Activated CD8-positive, alpha-beta T cell treated with anti-CD3 and anti-CD28 coated beads for 36 hours (primary cell): ENCODE measurements at regions of chr10 and their contacts with region 1.

Region 1: GRCh38 chr10:96374985-96375830 is 16.4 kb upstream of the OPALIN start:
- DNase-seq: peak; percentile 85
- ATAC-seq: peak; percentile 92
- H3K4me3 Mint-ChIP-seq: peak overlapping the region; percentile 78
- H3K27ac Mint-ChIP-seq: no peak overlapping the region
- H3K4me1 Mint-ChIP-seq: peaks cover 6% of the 10 kb centered on the region
- H3K27me3 Mint-ChIP-seq: peaks cover 7% of the 10 kb centered on the region
- CTCF ChIP-seq: peak; percentile 99

Region 2: DNA sequence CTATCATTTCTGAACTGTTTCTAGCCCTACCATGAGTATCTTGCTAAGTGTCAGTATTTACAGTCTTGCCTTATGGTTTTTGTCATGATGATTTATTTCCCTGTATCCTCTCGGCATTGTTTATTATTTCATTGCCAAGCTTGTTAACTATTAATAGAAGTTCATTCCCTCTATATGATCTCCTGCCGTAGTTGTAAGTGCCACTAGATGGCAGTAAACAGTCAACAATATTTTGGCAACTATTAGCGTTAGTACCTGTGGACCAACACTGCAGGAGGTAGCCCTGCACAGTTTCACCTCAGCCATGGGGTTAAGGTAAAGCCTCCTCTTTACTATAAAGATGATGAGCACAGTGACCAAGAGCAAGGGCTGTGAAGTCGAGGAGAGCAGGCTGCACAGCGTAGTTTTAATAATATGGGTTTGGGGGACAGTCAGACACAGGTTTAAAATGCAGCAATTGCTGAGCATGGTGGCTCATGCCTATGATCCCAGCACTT is 358.0 kb before region 1 on chr10:
- CTCF ChIA-PET with region 1: interaction called, 10 read pairs
- POLR2A ChIA-PET with region 1: no interaction called
- intact Hi-C with region 1: no loop called
- DNase-seq: peak; percentile 45
- ATAC-seq: peak; percentile 92
- H3K4me3 Mint-ChIP-seq: no peak overlapping the region
- H3K27ac Mint-ChIP-seq: no peak overlapping the region
- H3K4me1 Mint-ChIP-seq: no peaks in the 10 kb centered on the region
- H3K27me3 Mint-ChIP-seq: no peaks in the 10 kb centered on the region
- CTCF ChIP-seq: peak; percentile 77

Region 3: GRCh38 chr10:96358851-96359540 is 16.2 kb before region 1 on chr10 and contains the start of gene OPALIN:
- CTCF ChIA-PET with region 1: interaction called, 25 read pairs
- POLR2A ChIA-PET with region 1: no interaction called
- intact Hi-C with region 1: no loop called
- DNase-seq: no peak
- ATAC-seq: no peak
- H3K4me3 Mint-ChIP-seq: no peak within 1 kb of the TSS
- H3K27ac Mint-ChIP-seq: no peak within 1 kb of the TSS
- H3K4me1 Mint-ChIP-seq: no peaks in the 10 kb centered on the region
- H3K27me3 Mint-ChIP-seq: peaks cover 10% of the 10 kb centered on the region
- CTCF ChIP-seq: no peak
- total RNA-seq, gene OPALIN: not detected

Region 4: DNA sequence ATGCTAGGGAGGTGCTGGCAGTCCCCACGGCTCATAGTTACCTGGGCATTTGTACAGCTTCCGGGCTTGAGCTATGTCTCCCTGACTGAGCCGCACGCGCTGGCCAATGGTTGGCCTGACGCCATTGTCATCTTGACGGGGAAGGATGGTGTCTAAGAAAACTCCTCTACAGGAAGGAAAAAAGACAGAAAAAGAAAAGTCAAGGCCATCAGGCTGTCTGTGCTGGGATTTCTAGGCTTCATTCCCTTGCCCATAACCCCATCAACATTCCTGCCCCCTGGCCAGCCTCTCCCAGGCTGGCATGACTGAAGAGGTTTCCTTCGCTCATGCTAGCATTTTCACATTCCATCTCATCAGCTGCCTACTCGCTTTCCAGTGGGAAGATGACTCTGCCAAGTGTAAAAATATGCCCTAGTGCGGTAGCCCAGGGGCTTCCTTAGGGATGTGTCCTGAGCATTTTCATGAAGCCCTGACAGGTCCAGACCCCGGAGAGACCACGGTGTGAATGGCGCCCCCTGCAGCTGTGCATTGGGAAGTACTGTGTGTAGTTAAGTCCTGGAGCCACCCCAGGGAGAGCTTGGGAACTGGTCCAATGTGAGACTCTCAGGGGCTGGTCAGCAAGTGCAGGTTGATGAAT is 38.1 kb after region 1 on chr10:
- CTCF ChIA-PET with region 1: interaction called, 10 read pairs
- POLR2A ChIA-PET with region 1: no interaction called
- intact Hi-C with region 1: no loop called
- DNase-seq: peak; percentile 13
- ATAC-seq: no peak
- H3K4me3 Mint-ChIP-seq: no peak overlapping the region
- H3K27ac Mint-ChIP-seq: no peak overlapping the region
- H3K4me1 Mint-ChIP-seq: no peaks in the 10 kb centered on the region
- H3K27me3 Mint-ChIP-seq: peaks cover 7% of the 10 kb centered on the region
- CTCF ChIP-seq: no peak

Region 5: GRCh38 chr10:96513698-96514561 is 138.7 kb after region 1 on chr10 and contains the start of gene TLL2:
- CTCF ChIA-PET with region 1: interaction called, 33 read pairs
- POLR2A ChIA-PET with region 1: no interaction called
- intact Hi-C with region 1: no loop called
- DNase-seq: peak; percentile 71
- ATAC-seq: peak; percentile 80
- H3K4me3 Mint-ChIP-seq: peak within 1 kb of the TSS; percentile 60
- H3K27ac Mint-ChIP-seq: no peak within 1 kb of the TSS
- H3K4me1 Mint-ChIP-seq: peaks cover 13% of the 10 kb centered on the region
- H3K27me3 Mint-ChIP-seq: peaks cover 43% of the 10 kb centered on the region
- CTCF ChIP-seq: peak; percentile 34
- total RNA-seq, gene TLL2: 0.09 to 0.18 TPM